Calu3 (cell line): ENCODE measurements at regions of chr14 and their contacts with region 1.

Region 1: DNA sequence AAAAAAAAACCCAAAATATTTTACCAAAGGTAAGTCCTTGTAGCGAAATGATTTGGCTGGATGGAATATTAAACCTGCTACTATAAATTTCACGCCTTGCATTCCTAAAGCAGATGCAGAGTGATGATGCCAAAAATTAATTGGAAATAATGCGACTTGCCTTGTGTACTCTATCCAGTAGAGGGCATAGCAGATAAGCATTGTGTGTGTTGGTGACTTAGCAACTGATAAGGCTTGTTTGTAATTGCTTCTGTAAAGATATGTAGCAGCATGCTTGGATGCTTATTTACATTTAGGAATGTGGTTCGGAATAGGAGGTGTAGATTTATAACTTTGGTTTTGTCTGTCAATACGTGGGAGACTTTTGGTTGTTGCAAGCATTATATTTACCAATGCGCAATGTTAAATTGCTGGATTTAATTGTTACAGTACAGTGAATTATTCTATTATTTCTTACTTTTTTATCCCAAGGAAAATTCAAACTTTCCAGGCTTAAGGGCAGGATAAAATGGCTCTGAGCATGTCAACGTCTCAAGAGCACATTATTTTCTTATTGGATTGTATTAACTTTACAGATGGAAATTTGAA is 80.5 kb downstream of the TMEM260 start:
- DNase-seq: peak; percentile 4
- H3K4me3 Mint-ChIP-seq: no peak overlapping the region
- H3K27ac Mint-ChIP-seq: no peak overlapping the region
- H3K4me1 Mint-ChIP-seq: no peaks in the 10 kb centered on the region
- H3K27me3 Mint-ChIP-seq: peaks cover 4% of the 10 kb centered on the region
- CTCF ChIP-seq: peak; percentile 36

Region 2: GRCh38 chr14:56491299-56492285 is 168.5 kb before region 1 on chr14:
- CTCF ChIA-PET with region 1: interaction called, 3 read pairs
- intact Hi-C with region 1: loop called (anchors 2 kb)
- DNase-seq: peak; percentile 41
- H3K4me3 Mint-ChIP-seq: no peak overlapping the region
- H3K27ac Mint-ChIP-seq: no peak overlapping the region
- H3K4me1 Mint-ChIP-seq: no peaks in the 10 kb centered on the region
- H3K27me3 Mint-ChIP-seq: peaks cover 65% of the 10 kb centered on the region
- CTCF ChIP-seq: peak; percentile 66

Region 3: DNA sequence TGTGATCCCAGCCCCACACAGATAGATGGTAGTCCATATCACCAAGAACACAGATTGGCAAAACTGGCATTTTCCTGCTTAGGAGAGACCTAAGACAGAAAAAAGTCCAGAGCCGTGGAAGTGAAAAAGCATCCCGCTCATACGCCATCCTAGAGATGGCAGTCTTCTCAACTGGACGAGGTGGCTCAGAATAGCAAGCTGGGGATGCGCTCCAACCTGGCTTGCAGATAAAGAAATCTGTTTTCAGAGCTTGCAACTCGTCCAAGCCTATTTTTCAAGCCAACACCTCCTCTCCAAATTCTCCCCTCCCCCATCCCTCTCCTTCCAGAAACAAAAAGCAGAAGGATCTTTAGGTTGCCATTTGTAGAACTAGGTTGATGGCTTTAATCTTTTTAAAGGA is 224.6 kb after region 1 on chr14:
- CTCF ChIA-PET with region 1: no interaction called
- intact Hi-C with region 1: loop called (anchors 10 kb)
- DNase-seq: no peak
- H3K4me3 Mint-ChIP-seq: no peak overlapping the region
- H3K27ac Mint-ChIP-seq: no peak overlapping the region
- H3K4me1 Mint-ChIP-seq: no peaks in the 10 kb centered on the region
- H3K27me3 Mint-ChIP-seq: peaks cover 76% of the 10 kb centered on the region
- CTCF ChIP-seq: no peak

Region 4: DNA sequence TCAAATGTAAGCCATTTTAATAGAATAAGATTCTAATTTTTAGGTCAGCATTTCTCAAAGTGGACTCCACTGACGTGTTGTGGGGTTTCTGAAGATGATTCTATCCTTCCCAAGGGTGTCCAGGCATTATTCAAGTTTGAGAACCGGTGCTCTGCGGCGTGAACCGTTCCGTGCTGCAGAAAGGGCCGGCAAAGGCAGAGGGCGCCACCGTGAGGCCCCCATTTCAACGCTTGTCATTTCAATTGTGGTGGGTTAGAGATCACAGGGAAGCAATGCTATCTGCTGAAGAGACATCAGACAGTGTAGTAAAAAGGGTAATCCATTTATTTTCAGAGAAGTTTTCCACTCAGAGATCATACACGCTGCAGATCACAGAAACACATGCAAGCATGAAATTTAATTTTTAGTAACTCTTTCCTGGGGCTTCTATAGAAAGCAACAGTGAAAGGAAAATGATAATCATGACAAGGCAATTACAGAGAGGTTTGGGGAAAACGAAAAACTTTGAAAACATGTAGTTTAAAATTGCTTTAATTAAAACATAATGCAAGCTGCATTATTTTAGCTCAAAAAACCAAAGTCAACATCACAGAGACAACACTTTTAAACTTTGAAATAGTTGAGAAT is 406.9 kb after region 1 on chr14:
- CTCF ChIA-PET with region 1: no interaction called
- intact Hi-C with region 1: loop called (anchors 5 kb)
- DNase-seq: peak; percentile 52
- H3K4me3 Mint-ChIP-seq: no peak overlapping the region
- H3K27ac Mint-ChIP-seq: no peak overlapping the region
- H3K4me1 Mint-ChIP-seq: no peaks in the 10 kb centered on the region
- H3K27me3 Mint-ChIP-seq: peaks cover 11% of the 10 kb centered on the region
- CTCF ChIP-seq: peak; percentile 55

Region 5: DNA sequence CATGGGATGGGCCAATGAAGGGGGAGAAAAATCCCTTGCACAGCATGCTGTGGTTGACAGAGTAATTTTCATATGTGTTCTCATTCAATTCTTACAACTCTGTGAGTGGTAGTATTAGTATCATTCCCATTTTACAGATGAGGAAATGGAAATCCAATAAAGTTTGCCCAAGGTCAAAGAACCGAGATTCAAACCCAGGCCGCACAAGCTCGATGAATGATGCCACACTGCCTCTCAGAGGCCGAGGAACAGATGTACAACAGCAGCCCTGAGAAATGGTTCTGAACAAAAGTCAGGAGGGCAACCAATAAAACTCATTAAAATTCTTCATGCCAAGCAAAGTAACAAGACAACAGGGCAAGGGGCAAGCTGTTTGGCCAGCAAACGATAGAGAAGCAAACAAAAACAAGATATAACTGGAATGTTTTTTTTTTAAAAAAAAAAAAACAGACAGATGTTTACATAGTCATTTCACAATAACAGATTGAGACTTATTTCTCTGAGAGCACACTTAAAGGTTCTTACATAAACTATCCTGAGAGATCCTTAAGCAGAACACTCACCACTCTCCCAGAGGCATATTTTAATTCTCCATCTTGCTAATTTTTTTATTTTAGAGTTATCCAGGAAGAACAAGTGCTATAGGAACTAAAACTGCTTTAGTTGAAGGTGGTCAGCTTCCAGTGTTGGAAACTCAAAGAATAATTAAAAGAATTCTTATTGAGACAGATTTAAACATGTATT is 522.9 kb after region 1 on chr14:
- CTCF ChIA-PET with region 1: no interaction called
- intact Hi-C with region 1: loop called (anchors 2 kb)
- DNase-seq: peak; percentile 13
- H3K4me3 Mint-ChIP-seq: no peak overlapping the region
- H3K27ac Mint-ChIP-seq: no peak overlapping the region
- H3K4me1 Mint-ChIP-seq: no peaks in the 10 kb centered on the region
- H3K27me3 Mint-ChIP-seq: peaks cover 86% of the 10 kb centered on the region
- CTCF ChIP-seq: no peak